ENCODE measurements at regions of chr3 and their contacts with region 1.

Region 1: DNA sequence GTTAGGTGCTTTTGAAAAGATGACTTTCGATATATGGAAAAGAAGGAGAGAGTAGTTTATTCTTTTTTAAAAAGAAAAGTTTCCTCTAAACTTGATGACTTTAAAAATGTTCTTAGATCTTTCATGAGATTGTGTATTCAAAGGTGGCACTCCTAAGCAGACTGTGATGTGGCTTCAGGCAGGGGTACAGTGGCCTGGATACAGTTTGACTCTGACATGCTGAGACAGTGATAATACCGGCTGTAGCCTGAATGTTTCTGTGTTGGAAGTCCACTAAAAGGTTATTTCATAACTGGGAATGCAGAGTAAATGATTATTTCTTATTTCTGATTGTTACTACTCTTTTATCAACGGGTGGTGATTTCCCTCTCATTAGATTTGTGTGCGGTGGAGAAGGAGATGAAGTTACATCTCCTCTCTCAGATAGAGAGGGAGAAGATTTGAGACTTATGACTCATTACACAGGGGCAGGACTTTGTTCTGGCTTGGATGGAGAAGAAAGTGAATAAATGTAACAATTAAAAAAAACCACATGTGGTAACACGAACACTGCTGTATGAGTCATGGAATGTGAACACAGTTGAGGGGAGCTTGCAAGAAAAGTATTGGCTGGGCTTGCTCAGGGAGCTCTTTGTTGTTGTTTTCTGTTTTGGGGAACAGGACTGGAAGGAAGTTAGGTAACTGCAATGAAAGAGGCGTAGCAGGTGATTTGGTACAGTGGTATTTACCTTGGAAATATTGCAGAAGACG is 21.6 kb downstream of the SPTSSB start:
- DNase-seq: no peak
- H3K4me3 Mint-ChIP-seq: no peak overlapping the region
- H3K27ac Mint-ChIP-seq: no peak overlapping the region
- H3K4me1 Mint-ChIP-seq: peaks cover 15% of the 10 kb centered on the region
- H3K27me3 Mint-ChIP-seq: peaks cover 39% of the 10 kb centered on the region

Region 2: GRCh38 chr3:161310649-161311423 is 38.9 kb before region 1 on chr3:
- intact Hi-C with region 1: loop called (anchors 2 kb)
- DNase-seq: peak; percentile 52
- H3K4me3 Mint-ChIP-seq: peak overlapping the region; percentile 2
- H3K27ac Mint-ChIP-seq: peak overlapping the region; percentile 56
- H3K4me1 Mint-ChIP-seq: peaks cover 22% of the 10 kb centered on the region
- H3K27me3 Mint-ChIP-seq: peaks cover 43% of the 10 kb centered on the region

Region 3: GRCh38 chr3:161371430-161372326 is 22.0 kb after region 1 on chr3 and contains the start of gene SPTSSB:
- intact Hi-C with region 1: no loop called
- DNase-seq: no peak
- H3K4me3 Mint-ChIP-seq: peak within 1 kb of the TSS; percentile 55
- H3K27ac Mint-ChIP-seq: no peak within 1 kb of the TSS
- H3K4me1 Mint-ChIP-seq: peaks cover 22% of the 10 kb centered on the region
- H3K27me3 Mint-ChIP-seq: peaks cover 73% of the 10 kb centered on the region
- total RNA-seq, gene SPTSSB: not detected in 2 replicates

Measured in activated T-helper 1 cell treated with anti-CD3 and anti-CD28 coated beads, Interleukin-12 subunit alpha, Interleukin-12 subunit beta, Interleukin-2, Interleukin-4 antibody, amounts not matched to agents 30 ng/mL and 10 ng/mL and 1 ng/mL, durations not matched to agents 14 hours and 24 hours and 36 hours (primary cell).